Aorta (tissue), 5 donors: ENCODE measurements at regions of chr1 and their contacts with region 1.

Region 1: DNA sequence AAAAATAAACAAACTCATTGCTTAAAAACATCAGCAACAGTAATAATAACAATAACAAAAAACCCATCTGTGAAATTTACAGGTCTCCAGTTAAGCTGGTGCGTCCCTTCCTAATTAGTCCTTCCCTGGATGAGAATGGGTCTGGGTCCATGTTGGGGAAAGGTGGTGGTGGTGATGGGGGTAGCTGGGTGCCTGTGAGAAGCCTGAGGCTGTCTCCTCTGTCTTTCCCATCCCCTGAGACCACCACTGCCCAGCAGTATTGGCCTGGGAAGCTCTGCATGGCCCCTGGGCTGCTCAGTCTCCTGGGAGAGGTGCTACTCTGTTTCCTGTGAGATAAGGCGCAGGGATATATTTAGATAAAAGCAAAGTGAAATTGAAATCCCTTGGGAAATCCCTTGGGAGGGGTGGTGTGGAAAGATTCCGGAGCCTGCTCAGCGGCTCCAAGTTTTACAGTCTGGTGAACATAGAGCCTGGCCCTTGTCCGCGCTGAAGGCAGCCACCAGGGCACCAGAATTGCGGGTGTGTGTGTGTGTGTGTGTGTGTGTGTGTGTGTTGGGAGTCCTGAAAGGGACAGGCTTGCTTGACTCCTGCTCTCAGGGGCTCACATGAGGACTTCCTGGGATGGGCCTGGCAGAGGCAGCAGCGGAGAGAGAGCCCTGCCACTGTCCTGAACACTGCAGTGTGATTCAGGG is 150.2 kb downstream of the FOXD2 start:
- DNase-seq: peak in 1 of 2 donors; percentile 58
- ATAC-seq: peak; percentile 62
- H3K4me3 ChIP-seq: no peak overlapping the region
- H3K27ac ChIP-seq: no peak overlapping the region
- H3K4me1 ChIP-seq: peaks cover 0 to 2% of the 10 kb centered on the region in 2 donors
- H3K27me3 ChIP-seq: no peaks in the 10 kb centered on the region

Region 2: DNA sequence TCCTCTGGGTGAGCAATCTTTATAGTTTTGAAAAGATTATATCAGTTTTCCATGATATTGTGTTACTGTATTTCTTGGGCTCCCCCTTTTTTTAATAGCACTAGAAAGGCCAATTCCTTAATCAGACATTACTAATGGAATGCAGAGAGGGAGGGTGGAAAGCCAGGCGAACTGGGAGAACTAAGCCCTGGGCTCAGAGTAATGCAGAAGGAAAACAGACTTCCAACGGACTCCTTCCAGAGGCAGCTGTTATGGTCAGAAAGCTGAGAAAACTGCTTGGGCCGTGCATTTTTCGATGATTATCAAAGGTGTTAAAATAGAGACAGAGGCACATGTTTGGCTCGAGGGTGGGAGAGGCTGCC is 56.2 kb after region 1 on chr1:
- intact Hi-C with region 1: loop called in 1 of 2 experiments (anchors 5 kb)
- DNase-seq: no peak
- ATAC-seq: peak; percentile 73
- H3K4me3 ChIP-seq: no peak overlapping the region
- H3K27ac ChIP-seq: peak overlapping the region; percentile 38 to 70
- H3K4me1 ChIP-seq: no peaks in the 10 kb centered on the region
- H3K27me3 ChIP-seq: no peaks in the 10 kb centered on the region